ENCODE measurements at regions of chr1 and their contacts with region 1.

Region 1: DNA sequence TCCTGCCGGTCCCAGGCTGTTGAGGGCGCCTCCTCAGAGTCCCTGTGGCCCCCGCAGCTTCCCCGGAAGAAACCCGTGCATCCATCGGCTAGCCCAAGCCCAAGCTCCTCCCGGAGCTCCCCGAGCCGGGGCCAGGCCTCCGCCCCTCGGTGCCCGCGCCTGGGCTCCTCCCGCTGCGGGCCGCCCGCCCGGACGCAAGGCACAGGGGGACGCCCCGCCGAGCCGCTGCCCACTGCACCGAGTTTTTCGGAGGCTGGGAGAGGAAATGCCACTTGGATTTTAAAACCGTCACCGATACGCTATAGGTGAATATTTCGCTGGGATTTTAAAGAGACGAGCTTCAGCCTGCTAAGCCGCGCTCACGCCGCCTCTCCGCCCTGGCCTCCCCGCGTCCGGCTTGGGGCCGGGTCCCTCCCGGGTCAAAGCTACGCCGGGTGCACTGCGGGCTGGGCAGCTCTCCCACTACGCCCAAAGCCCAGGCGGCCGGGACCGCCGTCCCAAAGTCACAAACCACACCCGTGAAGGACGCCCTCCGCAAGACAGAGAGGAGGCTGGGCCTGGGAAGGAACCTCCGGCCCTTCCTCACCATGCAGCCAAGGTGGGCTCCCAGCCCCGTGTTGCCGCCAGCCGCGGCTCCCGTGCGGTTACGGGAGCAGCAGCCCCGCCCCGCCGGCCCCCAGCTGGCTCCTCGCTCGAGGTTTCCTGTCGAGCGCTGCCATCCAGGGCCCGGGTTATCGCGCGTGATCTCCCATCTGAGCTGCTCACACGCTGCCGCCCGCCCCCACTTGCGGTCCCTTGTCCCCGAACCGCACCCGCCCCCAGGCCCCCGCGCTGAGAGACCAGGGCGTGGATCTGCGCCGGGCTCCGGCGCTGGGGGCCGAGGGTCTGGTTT is 63.2 kb downstream of the CD247 start:
- DNase-seq: peak; percentile 70 to 93 (median 80)
- ATAC-seq: peak; percentile 69
- H3K4me3 ChIP-seq: peak overlapping the region; percentile 76
- H3K4me3 Mint-ChIP-seq: peak overlapping the region; percentile 94
- H3K27ac ChIP-seq: peak overlapping the region; percentile 93 to 98
- H3K27ac Mint-ChIP-seq: peak overlapping the region; percentile 100
- H3K4me1 ChIP-seq: peaks cover 88% of the 10 kb centered on the region
- H3K4me1 Mint-ChIP-seq: peaks cover 82% of the 10 kb centered on the region
- H3K27me3 ChIP-seq: no peaks in the 10 kb centered on the region
- H3K27me3 Mint-ChIP-seq: no peaks in the 10 kb centered on the region
- CTCF ChIP-seq: no peak

Region 2: DNA sequence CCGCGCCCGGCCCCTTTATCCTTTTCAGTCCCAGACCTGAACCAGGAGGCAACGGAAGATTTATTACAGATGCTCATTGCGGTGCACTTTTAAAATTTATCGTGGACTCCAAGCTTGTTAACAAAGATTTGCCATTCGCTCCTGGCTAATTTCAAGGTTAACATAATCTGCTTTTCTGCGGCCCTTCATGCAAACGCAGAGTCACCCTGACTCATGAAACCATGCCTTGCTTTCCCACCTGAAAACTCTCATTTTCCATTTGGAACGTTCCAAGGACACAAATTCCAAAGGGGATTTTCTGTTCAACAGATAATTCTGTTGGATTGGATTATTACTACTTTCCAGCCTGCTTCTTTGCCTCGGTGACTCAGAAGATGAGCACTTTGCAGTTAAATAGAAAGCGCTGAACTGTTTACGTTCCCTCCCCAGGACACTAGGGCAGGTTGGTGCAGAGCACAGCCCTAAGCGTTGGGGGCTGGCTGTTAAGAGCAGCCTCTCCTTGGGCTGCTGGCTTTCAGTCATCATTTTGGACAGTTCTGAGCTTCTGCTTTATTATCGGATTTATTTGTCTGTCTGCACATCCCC is 12.1 kb after region 1 on chr1:
- CTCF ChIA-PET with region 1: interaction called, 4 read pairs
- POLR2A ChIA-PET with region 1: interaction called, 78 read pairs
- intact Hi-C with region 1: no loop called
- DNase-seq: peak in 2 of 14 experiments; percentile 34
- ATAC-seq: peak; percentile 55
- H3K4me3 ChIP-seq: no peak overlapping the region
- H3K4me3 Mint-ChIP-seq: peak overlapping the region; percentile 44
- H3K27ac ChIP-seq: peak overlapping the region; percentile 3 to 46
- H3K27ac Mint-ChIP-seq: peak overlapping the region; percentile 100
- H3K4me1 ChIP-seq: peaks cover 66% of the 10 kb centered on the region
- H3K4me1 Mint-ChIP-seq: peaks cover 93% of the 10 kb centered on the region
- H3K27me3 ChIP-seq: no peaks in the 10 kb centered on the region
- H3K27me3 Mint-ChIP-seq: no peaks in the 10 kb centered on the region
- CTCF ChIP-seq: no peak

Region 3: DNA sequence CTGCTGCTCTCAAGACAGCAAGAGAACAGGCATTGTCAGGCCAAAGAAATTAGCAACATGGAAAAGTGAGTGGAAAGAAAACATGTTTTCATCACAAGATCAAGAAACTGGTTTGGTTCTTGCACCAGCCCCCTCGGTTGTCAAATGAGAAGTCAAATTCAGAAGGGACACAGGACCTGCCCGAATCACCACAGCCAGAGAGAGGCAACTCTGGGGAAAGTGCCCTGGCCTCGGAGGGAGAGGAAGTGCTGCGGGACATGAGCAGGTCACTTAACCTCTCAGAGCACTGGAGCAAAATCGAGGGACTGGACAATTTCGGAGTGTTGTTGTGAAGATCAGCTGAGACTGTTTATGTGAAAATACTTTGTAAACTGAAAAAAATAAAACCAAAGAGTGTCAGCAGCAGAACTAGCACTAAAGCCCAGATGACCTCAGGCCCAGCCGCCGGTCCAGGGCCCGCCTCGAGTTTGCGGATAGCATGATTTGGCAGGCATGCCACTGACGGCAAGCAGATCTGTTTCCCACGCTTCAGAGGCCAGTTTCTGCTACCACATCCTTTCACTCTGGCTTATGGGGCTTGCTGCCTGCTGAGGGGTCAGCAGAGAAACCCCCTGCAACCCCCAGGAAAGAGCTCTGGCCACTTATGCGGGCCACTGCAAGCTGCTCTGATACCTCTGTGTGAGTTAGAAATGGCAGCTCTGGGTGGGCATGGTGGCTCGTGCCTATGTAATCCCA is 31.1 kb after region 1 on chr1:
- CTCF ChIA-PET with region 1: interaction called, 9 read pairs
- POLR2A ChIA-PET with region 1: interaction called, 117 read pairs
- intact Hi-C with region 1: loop called (anchors 2 to 5 kb)
- DNase-seq: peak in 3 of 14 experiments; percentile 40 to 51 (median 46)
- ATAC-seq: no peak
- H3K4me3 ChIP-seq: peak overlapping the region; percentile 22
- H3K4me3 Mint-ChIP-seq: peak overlapping the region; percentile 80
- H3K27ac ChIP-seq: peak overlapping the region; percentile 78 to 80
- H3K27ac Mint-ChIP-seq: peak overlapping the region; percentile 100
- H3K4me1 ChIP-seq: peaks cover 98% of the 10 kb centered on the region
- H3K4me1 Mint-ChIP-seq: peaks cover 100% of the 10 kb centered on the region
- H3K27me3 ChIP-seq: no peaks in the 10 kb centered on the region
- H3K27me3 Mint-ChIP-seq: no peaks in the 10 kb centered on the region
- CTCF ChIP-seq: no peak

Region 4: DNA sequence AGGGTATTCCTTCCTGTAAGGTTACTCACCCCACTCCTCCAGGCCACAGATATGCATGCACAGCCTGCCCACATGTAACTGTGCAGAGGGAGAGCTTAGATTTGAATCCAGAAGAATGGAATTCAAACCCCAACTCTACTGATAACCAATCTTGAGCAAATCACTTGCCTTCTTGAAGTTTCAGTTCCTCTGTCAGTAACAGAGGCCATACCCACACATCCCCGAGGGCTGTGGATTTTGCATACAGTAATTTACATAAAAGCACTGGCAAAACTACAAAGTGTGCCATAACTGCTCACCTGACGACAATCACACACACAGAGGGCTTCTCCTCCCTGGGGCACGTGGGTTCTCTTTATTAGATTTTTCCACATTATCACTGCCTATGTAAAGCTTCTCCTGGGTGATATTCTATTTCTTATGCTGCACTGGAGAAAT is 44.5 kb after region 1 on chr1:
- CTCF ChIA-PET with region 1: interaction called, 6 read pairs
- POLR2A ChIA-PET with region 1: interaction called, 15 read pairs
- intact Hi-C with region 1: loop called in 1 of 2 experiments (anchors 5 kb)
- DNase-seq: peak in 4 of 14 experiments; percentile 34 to 70 (median 52)
- ATAC-seq: peak; percentile 68
- H3K4me3 ChIP-seq: no peak overlapping the region
- H3K4me3 Mint-ChIP-seq: peak overlapping the region; percentile 47
- H3K27ac ChIP-seq: peak overlapping the region; percentile 26 to 29
- H3K27ac Mint-ChIP-seq: peak overlapping the region; percentile 100
- H3K4me1 ChIP-seq: peaks cover 96% of the 10 kb centered on the region
- H3K4me1 Mint-ChIP-seq: peaks cover 99% of the 10 kb centered on the region
- H3K27me3 ChIP-seq: no peaks in the 10 kb centered on the region
- H3K27me3 Mint-ChIP-seq: no peaks in the 10 kb centered on the region
- CTCF ChIP-seq: no peak

Region 5: DNA sequence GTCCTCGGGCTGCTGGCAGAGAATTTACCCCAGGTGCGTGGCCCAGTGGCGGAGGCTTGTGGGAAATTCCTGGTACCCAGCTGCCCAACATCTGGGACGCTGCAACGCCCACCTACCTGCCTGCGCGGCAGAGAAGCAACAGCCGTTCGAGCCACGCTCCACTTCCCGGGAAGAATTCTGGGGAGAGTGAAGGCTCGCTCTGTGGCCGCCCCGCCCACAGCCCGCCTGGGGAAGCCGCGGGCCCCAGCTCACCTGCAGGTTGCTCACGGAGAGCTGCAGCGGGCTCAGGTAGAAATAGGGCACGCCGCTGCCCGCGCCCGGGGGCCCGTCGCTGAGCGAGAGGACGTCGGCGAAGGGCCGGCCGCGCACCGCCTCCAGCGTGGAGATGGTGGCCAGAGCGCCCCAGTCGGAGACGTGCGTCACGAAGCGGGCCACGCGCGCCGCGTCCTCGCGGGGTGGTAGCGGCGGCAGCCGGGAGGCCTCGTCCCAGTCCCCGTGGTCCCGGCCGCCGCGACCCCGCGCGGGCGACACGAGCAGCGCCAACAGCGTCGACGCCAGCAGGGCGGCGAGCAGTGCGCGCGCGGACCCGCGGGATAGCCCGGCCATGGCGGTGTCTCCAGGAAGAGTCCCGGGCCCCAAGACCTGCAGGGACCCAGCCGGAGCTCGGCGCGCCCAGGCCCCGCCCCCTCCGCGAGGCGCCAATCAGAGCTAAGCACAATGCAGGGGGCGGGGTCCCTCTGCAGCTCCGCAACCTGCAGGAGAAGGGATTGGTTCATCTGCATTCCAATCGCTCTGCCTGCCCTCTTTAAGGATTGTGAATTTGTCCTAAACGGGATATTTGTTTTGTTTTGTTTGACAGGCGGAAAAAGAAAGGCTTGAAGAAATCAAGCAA is 98.2 kb after region 1 on chr1 and contains the start of gene CREG1:
- CTCF ChIA-PET with region 1: interaction called, 4 read pairs
- POLR2A ChIA-PET with region 1: interaction called, 13 read pairs
- intact Hi-C with region 1: no loop called
- DNase-seq: peak; percentile 76 to 95 (median 86)
- ATAC-seq: peak; percentile 97
- H3K4me3 ChIP-seq: peak within 1 kb of the TSS; percentile 75
- H3K4me3 Mint-ChIP-seq: peak within 1 kb of the TSS; percentile 96
- H3K27ac ChIP-seq: peak within 1 kb of the TSS in 1 of 2 donors; percentile 25
- H3K27ac Mint-ChIP-seq: peak within 1 kb of the TSS; percentile 81
- H3K4me1 ChIP-seq: peaks cover 25% of the 10 kb centered on the region
- H3K4me1 Mint-ChIP-seq: peaks cover 42% of the 10 kb centered on the region
- H3K27me3 ChIP-seq: no peaks in the 10 kb centered on the region
- H3K27me3 Mint-ChIP-seq: no peaks in the 10 kb centered on the region
- CTCF ChIP-seq: no peak
- total RNA-seq, gene CREG1: 10.7 to 11.2 TPM

Measured in CD4-positive, alpha-beta T cell (primary cell).